ENCODE measurements at regions of chr5 and their contacts with region 1.

Region 1: DNA sequence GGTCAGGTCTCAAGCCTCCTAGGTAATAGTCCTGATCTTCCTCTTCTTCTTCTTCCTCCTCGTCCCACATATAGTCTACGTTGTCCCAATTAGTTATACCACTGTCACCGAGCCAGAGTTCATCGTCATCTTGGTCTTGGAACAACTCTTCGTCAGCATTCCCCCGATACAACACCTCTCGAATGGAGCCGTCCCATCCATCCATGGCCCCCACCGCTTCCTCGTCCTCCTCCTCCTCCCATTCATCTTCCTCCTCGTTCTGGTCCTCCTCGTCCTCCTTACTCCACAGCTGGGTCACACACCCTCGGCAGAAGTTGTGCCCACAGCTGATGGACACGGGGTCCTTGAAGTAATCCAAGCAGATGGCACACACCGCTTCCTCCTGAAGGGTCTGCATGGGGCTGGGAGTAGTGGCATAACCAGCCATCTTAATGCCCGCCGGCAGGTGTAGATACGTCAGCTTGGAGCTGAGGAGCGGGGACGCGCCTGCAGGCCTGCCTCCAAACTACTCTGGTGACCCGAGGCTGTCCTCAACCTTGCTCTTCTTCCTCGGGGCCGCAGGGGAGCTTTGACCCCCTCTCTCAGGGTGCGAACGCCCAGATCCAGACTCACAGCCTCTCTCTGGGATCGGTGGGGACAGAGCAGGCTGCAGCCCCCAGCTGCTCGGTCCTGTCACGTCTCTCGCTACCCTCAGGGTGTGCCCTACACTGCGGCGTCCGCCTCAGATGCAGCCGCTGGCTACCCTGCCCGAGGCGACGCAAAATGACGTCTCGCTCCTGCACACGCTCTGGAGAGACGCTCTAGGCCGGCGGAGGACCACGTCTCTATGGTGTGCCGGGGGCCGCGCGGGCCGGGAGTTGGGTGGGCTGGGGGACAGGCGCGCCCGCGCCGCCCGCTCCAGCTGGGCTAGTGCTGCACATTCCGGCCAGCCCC is at the start of gene TRIM52:
- DNase-seq: peak; percentile 84 to 95 (median 88)
- ATAC-seq: peak; percentile 82 to 83
- H3K4me3 Mint-ChIP-seq: peak within 1 kb of the TSS; percentile 88 to 99 (median 98)
- H3K27ac Mint-ChIP-seq: peak within 1 kb of the TSS; percentile 93 to 99 (median 98)
- H3K4me1 Mint-ChIP-seq: peaks cover 33 to 55% (median 53%) of the 10 kb centered on the region in 4 donors
- H3K27me3 Mint-ChIP-seq: no peaks in the 10 kb centered on the region
- polyA plus RNA-seq, gene TRIM52: 23.6 to 36.3 (median 32.8) TPM

Region 2: DNA sequence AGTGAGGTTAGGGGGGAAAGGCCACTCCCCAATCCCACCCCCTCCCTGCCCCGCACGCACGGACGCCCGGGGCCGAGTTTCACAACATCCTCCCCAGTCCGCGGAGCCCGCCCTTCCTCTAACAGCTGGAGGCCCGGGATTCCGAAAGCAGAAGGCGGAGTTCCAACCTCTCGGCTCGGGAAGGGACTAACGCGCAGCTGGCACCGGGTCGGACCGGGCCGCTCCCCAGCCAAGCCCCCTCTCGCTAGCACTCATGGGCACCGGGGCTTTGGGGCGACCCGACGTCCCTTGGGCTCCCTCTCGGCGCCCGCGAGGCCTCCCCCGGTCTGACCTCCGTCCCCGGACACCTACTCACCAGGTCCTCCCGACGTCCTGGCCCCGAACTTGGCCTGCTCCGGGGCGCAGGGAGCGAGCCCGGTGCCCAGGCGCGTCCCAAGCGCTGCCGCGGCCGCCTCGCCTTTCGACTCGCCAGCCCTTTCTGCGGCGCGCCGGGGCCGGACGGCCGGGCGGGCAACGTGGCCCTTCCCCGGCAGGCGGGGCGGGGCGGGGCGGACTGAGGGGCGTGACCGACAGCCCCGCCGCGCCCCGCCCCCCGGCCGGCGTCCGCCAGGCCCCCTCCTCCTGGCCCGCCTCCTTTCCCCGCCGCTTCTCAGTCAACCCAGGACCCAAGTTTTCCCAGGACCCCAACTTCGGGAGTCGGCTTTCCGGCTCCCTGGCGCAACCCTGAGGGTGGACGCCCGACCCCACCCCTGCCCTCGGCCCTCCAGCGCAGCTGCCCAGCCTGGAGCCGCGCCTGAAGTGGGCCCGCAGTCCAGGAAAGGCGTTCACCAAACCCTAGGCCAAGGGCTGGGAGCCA is 458.1 kb before region 1 on chr5 and contains the start of gene MGAT1:
- POLR2A ChIA-PET with region 1: interaction called, 15 read pairs
- DNase-seq: peak; percentile 43 to 82 (median 68)
- ATAC-seq: peak; percentile 44 to 46
- H3K4me3 Mint-ChIP-seq: peak within 1 kb of the TSS; percentile 84 to 99 (median 93)
- H3K27ac Mint-ChIP-seq: peak within 1 kb of the TSS; percentile 93 to 100 (median 99)
- H3K4me1 Mint-ChIP-seq: peaks cover 58 to 88% (median 85%) of the 10 kb centered on the region in 4 donors
- H3K27me3 Mint-ChIP-seq: no peaks in the 10 kb centered on the region
- polyA plus RNA-seq, gene MGAT1: 108 to 149 (median 111) TPM

Region 3: GRCh38 chr5:181173420-181174342 is 87.0 kb before region 1 on chr5:
- POLR2A ChIA-PET with region 1: interaction called, 19 read pairs
- DNase-seq: peak in 8 of 10 donors; percentile 25 to 82 (median 70)
- ATAC-seq: peak; percentile 80 to 91
- H3K4me3 Mint-ChIP-seq: peak overlapping the region; percentile 79 to 100 (median 94)
- H3K27ac Mint-ChIP-seq: peak overlapping the region; percentile 10 to 94 (median 86)
- H3K4me1 Mint-ChIP-seq: peaks cover 15 to 39% (median 33%) of the 10 kb centered on the region in 4 donors
- H3K27me3 Mint-ChIP-seq: peaks cover 0 to 44% (median 8%) of the 10 kb centered on the region in 5 donors

Region 4: DNA sequence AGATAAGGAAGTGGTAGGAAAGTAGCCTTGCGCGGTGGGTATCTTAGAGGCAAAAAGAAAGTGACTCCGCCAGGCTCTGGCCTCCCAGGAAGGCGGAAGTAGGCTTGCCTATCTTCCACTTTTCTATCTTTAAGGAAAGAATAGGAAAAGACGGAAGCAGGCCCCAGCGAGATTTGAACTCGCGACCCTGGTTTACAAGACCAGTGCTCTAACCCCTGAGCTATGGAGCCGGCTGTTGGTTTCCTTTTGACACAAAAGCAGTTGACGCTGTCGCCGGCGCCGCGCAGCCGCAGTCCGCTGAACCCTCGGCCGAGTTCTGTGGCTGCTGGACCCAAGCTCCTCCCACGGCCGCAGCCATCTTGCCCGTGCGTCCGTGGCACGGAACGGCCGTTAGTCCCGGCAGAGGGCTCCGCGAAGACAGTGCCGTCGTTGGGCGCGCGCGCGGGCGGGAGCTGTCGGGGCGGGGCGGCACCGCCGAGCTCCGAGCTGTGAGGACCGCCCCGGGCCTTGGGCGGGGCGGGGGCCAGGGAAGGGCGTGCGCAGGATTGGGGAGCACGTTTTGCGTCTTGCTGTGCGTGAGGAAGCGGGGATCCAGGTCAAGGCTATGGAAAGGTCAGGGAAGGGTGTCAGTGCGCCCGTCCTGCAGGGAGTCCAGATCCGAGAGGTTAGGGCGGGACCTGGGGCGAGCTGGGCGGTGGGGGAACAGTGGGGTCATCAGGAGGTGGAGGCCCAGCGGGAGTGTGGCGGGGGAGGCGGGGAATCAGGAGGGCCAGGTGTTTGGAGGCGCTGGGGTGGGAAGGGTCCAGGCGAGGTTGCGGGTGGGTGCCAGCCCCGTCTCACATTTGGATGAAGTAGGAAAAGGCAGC is 68.9 kb before region 1 on chr5:
- POLR2A ChIA-PET with region 1: interaction called, 137 read pairs
- DNase-seq: peak; percentile 90 to 100 (median 97)
- ATAC-seq: peak; percentile 55 to 62
- H3K4me3 Mint-ChIP-seq: peak overlapping the region; percentile 92 to 98 (median 98)
- H3K27ac Mint-ChIP-seq: peak overlapping the region; percentile 90 to 100 (median 96)
- H3K4me1 Mint-ChIP-seq: peaks cover 24 to 48% (median 29%) of the 10 kb centered on the region in 4 donors
- H3K27me3 Mint-ChIP-seq: peaks cover 0 to 15% (median 0%) of the 10 kb centered on the region in 5 donors

Region 5: GRCh38 chr5:181223058-181223728 is 37.5 kb before region 1 on chr5 and contains the start of gene TRIM41:
- POLR2A ChIA-PET with region 1: interaction called, 212 read pairs
- DNase-seq: peak; percentile 91 to 99 (median 98)
- ATAC-seq: peak; percentile 63 to 71
- H3K4me3 Mint-ChIP-seq: peak within 1 kb of the TSS; percentile 91 to 100 (median 98)
- H3K27ac Mint-ChIP-seq: peak within 1 kb of the TSS; percentile 97 to 100 (median 99)
- H3K4me1 Mint-ChIP-seq: peaks cover 34 to 71% (median 67%) of the 10 kb centered on the region in 4 donors
- H3K27me3 Mint-ChIP-seq: peaks cover 0 to 10% (median 0%) of the 10 kb centered on the region in 5 donors
- polyA plus RNA-seq, gene TRIM41: 1.1 to 2.6 (median 1.6) TPM

Measured in naive thymus-derived CD8-positive, alpha-beta T cell (primary cell).